Dorsolateral prefrontal cortex (tissue), 120 donors: ENCODE measurements at regions of chr16 and their contacts with region 1.

Region 1: DNA sequence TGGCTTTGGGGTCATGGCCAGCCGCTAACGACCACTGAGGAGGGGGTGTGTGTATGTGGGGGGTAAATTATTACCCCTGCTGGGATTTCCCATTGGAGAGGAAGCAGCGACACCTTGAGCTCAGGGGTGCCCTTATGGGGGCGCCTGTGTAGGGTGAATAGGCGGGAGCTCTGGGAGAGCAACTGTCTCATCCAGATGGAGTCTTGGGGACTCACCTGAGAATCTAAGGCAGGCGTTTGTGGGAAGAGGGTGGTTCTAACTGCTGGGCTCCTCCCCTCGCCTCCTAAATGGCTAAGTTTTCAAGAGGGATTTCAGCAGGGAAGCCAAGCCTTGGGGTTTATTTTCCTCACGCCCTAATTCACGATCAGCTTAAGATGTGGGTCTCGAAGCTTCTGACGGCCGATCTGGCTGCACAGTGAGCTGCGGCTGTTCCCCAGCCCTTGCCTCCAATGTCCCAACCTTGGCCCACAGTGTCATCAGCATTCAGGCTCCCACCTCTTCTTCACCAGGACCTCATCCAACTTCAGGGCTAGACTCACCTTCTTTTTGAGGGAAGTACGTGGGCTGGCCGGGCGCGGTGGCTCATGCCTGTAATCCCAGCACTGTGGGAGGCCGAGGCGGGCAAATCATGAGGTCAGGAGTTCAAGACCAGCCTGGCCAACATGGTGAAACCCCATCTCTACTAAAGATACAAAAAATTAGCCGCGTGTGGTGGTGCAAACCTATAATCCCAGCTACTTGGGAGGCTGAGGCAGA is 136.9 kb upstream of the EEF2KMT start:
- DNase-seq: no peak
- H3K4me3 ChIP-seq: no peak overlapping the region
- H3K27ac ChIP-seq: no peak overlapping the region
- H3K27me3 ChIP-seq: peaks cover 0 to 10% (median 0%) of the 10 kb centered on the region in 45 donors
- CTCF ChIP-seq: no peak

Region 2: DNA sequence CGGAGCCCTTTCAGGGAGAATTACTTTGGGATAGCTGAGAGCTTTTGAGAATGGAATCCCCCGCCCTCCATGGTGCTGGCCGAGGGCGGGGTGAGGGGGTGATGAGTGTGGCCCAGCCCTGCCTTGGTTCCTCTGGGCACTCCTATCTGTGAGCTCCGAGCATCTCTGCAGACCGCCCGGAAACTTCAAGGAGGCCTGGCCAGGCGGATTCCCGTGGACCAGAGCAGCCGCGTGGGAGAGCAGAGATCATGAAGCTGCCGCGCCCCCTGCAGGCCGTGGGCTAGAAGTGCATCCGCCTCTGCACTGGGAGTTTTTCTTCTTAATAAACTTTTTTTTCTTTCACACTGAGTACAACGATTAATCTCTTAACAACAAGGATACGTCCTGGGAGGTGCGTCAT is 256.0 kb after region 1 on chr16:
- intact Hi-C with region 1: loop called (anchors 5 kb)
- DNase-seq: peak; percentile 14 to 80 (median 70)
- H3K4me3 ChIP-seq: no peak overlapping the region
- H3K27ac ChIP-seq: no peak overlapping the region
- H3K27me3 ChIP-seq: peaks cover 0 to 12% (median 0%) of the 10 kb centered on the region in 45 donors
- CTCF ChIP-seq: peak; percentile 63 to 91 (median 83)

Region 3: GRCh38 chr16:5615868-5616642 is 381.6 kb after region 1 on chr16:
- intact Hi-C with region 1: loop called in 1 of 2 experiments (anchors 10 kb)
- DNase-seq: peak; percentile 42 to 80 (median 66)
- H3K4me3 ChIP-seq: peak overlapping the region in 30 of 59 donors; percentile 6 to 52 (median 31)
- H3K27ac ChIP-seq: no peak overlapping the region
- H3K27me3 ChIP-seq: peaks cover 0 to 23% (median 0%) of the 10 kb centered on the region in 45 donors
- CTCF ChIP-seq: peak; percentile 46 to 92 (median 83)